GM12878 (cell line): ENCODE measurements at regions of chr15 and their contacts with region 1.

Region 1: DNA sequence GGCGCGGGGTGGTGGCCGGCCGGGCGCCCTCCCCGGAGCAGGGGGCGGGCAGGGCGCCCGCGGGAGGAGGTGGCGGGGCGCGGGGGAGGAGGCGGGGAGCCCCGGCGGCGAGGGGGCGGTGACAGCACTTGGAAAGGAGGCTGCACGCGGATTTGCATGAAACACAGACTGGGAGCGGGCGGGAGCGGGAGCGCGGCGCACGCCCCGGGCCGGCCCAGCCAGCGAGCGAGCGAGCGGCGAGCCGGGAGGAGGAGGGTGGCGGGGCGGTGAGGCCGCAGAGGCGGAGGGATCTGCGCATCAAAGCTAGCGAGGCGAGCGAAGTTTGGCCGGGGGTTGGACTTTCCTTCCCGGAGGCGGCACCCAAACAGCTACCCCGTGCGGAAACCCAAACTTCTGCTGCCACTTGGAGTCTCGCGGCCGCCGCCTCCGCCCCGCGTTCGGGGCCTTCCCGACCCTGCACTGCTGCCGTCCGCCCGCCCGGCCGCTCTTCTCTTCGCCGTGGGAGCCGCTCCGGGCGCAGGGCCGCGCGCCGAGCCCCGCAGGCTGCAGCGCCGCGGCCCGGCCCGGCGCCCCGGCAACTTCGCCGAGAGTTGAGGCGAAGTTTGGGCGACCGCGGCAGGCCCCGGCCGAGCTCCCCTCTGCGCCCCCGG is at the start of gene SMAD3:
- DNase-seq: no peak
- ATAC-seq: peak; percentile 72
- H3K4me3 ChIP-seq: peak within 1 kb of the TSS; percentile 80
- H3K27ac ChIP-seq: peak within 1 kb of the TSS; percentile 78
- H3K4me1 ChIP-seq: peaks cover 25% of the 10 kb centered on the region
- H3K27me3 ChIP-seq: no peaks in the 10 kb centered on the region
- CTCF ChIP-seq: no peak
- EP300 ChIP-seq: no peak
- POLR2A ChIP-seq: peak; percentile 93
- RAD21 ChIP-seq: no peak
- polyA plus RNA-seq, gene SMAD3: 5.6 to 6.6 TPM

Region 2: GRCh38 chr15:66946578-66947164 is 118.9 kb before region 1 on chr15:
- CTCF ChIA-PET with region 1: interaction called, 4 read pairs
- POLR2A ChIA-PET with region 1: no interaction called
- RAD21 ChIA-PET with region 1: interaction called, 4 read pairs
- SMC1A ChIA-PET with region 1: interaction called, 14 read pairs
- in situ Hi-C with region 1: no loop called
- intact Hi-C with region 1: no loop called
- DNase-seq: peak; percentile 39
- ATAC-seq: peak; percentile 87
- H3K4me3 ChIP-seq: no peak overlapping the region
- H3K27ac ChIP-seq: no peak overlapping the region
- H3K4me1 ChIP-seq: peaks cover 6% of the 10 kb centered on the region
- H3K27me3 ChIP-seq: no peaks in the 10 kb centered on the region; a peak in 1 of 4 replicates
- CTCF ChIP-seq: peak; percentile 85 to 97 (median 95)
- EP300 ChIP-seq: no peak
- POLR2A ChIP-seq: no peak
- RAD21 ChIP-seq: peak; percentile 98

Region 3: GRCh38 chr15:67047149-67047661 is 18.4 kb before region 1 on chr15:
- CTCF ChIA-PET with region 1: interaction called, 10 read pairs
- POLR2A ChIA-PET with region 1: interaction called, 6 read pairs
- RAD21 ChIA-PET with region 1: interaction called, 4 read pairs
- SMC1A ChIA-PET with region 1: interaction called, 4 read pairs
- in situ Hi-C with region 1: no loop called
- intact Hi-C with region 1: no loop called
- DNase-seq: no peak
- ATAC-seq: no peak
- H3K4me3 ChIP-seq: no peak overlapping the region
- H3K27ac ChIP-seq: no peak overlapping the region
- H3K4me1 ChIP-seq: peaks cover 16% of the 10 kb centered on the region
- H3K27me3 ChIP-seq: no peaks in the 10 kb centered on the region
- CTCF ChIP-seq: no peak
- EP300 ChIP-seq: no peak
- POLR2A ChIP-seq: no peak
- RAD21 ChIP-seq: no peak

Region 4: GRCh38 chr15:67303490-67304363 is 238.2 kb after region 1 on chr15:
- CTCF ChIA-PET with region 1: interaction called, 3 read pairs
- POLR2A ChIA-PET with region 1: no interaction called
- RAD21 ChIA-PET with region 1: interaction called, 3 read pairs
- SMC1A ChIA-PET with region 1: interaction called, 4 read pairs
- in situ Hi-C with region 1: no loop called
- intact Hi-C with region 1: loop called (anchors 5 kb)
- DNase-seq: peak; percentile 24
- ATAC-seq: peak; percentile 70
- H3K4me3 ChIP-seq: no peak overlapping the region
- H3K27ac ChIP-seq: no peak overlapping the region
- H3K4me1 ChIP-seq: no peaks in the 10 kb centered on the region
- H3K27me3 ChIP-seq: no peaks in the 10 kb centered on the region
- CTCF ChIP-seq: peak; percentile 38 to 68 (median 46); a peak in 5 of 6 replicates
- EP300 ChIP-seq: no peak
- POLR2A ChIP-seq: no peak
- RAD21 ChIP-seq: peak; percentile 94